Activated T-helper 2 cell treated with anti-CD3 and anti-CD28 coated beads, Interferon-gamma antibody, Interleukin-2, Interleukin-4, amounts not matched to agents 10 μg/mL and 5 μg/mL and 100 μg/mL, durations not matched to agents 14 hours and 24 hours and 36 hours (primary cell): ENCODE measurements at regions of chr10 and their contacts with region 1.

Region 1: GRCh38 chr10:71569775-71570588 is 149.6 kb downstream of the C10orf105 start:
- DNase-seq: peak; percentile 62
- H3K4me3 Mint-ChIP-seq: no peak overlapping the region
- H3K27ac Mint-ChIP-seq: no peak overlapping the region
- H3K4me1 Mint-ChIP-seq: no peaks in the 10 kb centered on the region
- H3K27me3 Mint-ChIP-seq: no peaks in the 10 kb centered on the region

Region 2: GRCh38 chr10:70247360-70247759 is 1322.6 kb before region 1 on chr10:
- intact Hi-C with region 1: no loop called
- DNase-seq: no peak
- H3K4me3 Mint-ChIP-seq: no peak overlapping the region
- H3K27ac Mint-ChIP-seq: no peak overlapping the region
- H3K4me1 Mint-ChIP-seq: no peaks in the 10 kb centered on the region
- H3K27me3 Mint-ChIP-seq: peaks cover 41% of the 10 kb centered on the region

Region 3: DNA sequence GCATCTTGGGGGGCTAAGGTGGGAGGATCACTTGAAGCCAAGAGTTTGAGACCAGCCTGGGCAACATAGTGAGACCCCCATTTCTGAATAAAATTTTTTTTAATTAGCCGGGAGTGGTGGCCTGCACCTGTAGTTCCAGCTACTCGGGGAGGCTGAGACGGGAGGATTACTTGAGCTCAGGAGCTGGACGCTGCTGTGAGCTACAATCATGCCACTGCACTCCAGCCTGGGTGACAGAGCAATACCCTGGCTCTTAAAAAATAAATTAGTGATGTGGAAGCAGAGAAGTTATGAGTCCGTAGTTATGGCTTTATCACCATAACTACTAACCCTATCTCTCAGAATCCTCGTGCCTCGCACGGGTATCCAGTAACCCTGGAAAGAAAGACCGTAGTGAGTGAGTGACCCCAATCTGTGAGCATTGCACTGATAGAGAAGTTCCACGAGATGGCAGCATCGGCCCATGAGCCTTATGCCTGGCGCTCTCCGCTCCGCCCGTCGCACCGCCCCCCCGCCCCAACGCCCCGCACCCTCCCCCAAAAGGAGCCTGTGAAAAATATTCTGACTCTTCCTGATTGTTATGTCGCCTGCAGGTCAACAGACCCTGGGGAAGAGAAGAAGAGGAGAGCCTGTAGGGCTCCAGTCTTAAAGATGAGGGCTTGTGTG is 255.8 kb before region 1 on chr10:
- intact Hi-C with region 1: loop called (anchors 1 kb)
- DNase-seq: peak; percentile 40
- H3K4me3 Mint-ChIP-seq: no peak overlapping the region
- H3K27ac Mint-ChIP-seq: no peak overlapping the region
- H3K4me1 Mint-ChIP-seq: peaks cover 23% of the 10 kb centered on the region
- H3K27me3 Mint-ChIP-seq: peaks cover 15% of the 10 kb centered on the region

Region 4: GRCh38 chr10:71383972-71384687 is 185.9 kb before region 1 on chr10:
- intact Hi-C with region 1: loop called (anchors 1 kb)
- DNase-seq: peak; percentile 64
- H3K4me3 Mint-ChIP-seq: no peak overlapping the region
- H3K27ac Mint-ChIP-seq: no peak overlapping the region
- H3K4me1 Mint-ChIP-seq: no peaks in the 10 kb centered on the region
- H3K27me3 Mint-ChIP-seq: peaks cover 18% of the 10 kb centered on the region

Region 5: GRCh38 chr10:71486484-71487114 is 83.4 kb before region 1 on chr10:
- intact Hi-C with region 1: loop called (anchors 1 kb)
- DNase-seq: peak; percentile 12
- H3K4me3 Mint-ChIP-seq: no peak overlapping the region
- H3K27ac Mint-ChIP-seq: no peak overlapping the region
- H3K4me1 Mint-ChIP-seq: no peaks in the 10 kb centered on the region
- H3K27me3 Mint-ChIP-seq: no peaks in the 10 kb centered on the region